GM12878 (cell line): ENCODE measurements at regions of chr2 and their contacts with region 1.

Region 1: GRCh38 chr2:218186355-218186766 is 19.6 kb upstream of the CXCR1 start:
- DNase-seq: peak; percentile 25
- ATAC-seq: peak; percentile 96
- H3K4me3 ChIP-seq: no peak overlapping the region
- H3K27ac ChIP-seq: no peak overlapping the region
- H3K4me1 ChIP-seq: no peaks in the 10 kb centered on the region
- H3K27me3 ChIP-seq: peaks cover 0 to 1% of the 10 kb centered on the region in 2 experiments; a peak in 3 of 4 replicates
- CTCF ChIP-seq: peak; percentile 82 to 86 (median 85)
- EP300 ChIP-seq: no peak
- POLR2A ChIP-seq: no peak
- RAD21 ChIP-seq: peak; percentile 78

Region 2: GRCh38 chr2:217471319-217471718 is 715.0 kb before region 1 on chr2:
- CTCF ChIA-PET with region 1: no interaction called
- POLR2A ChIA-PET with region 1: no interaction called
- RAD21 ChIA-PET with region 1: no interaction called
- SMC1A ChIA-PET with region 1: no interaction called
- in situ Hi-C with region 1: no loop called
- intact Hi-C with region 1: no loop called
- DNase-seq: no peak
- ATAC-seq: no peak
- H3K4me3 ChIP-seq: no peak overlapping the region
- H3K27ac ChIP-seq: no peak overlapping the region
- H3K4me1 ChIP-seq: peaks cover 6% of the 10 kb centered on the region
- H3K27me3 ChIP-seq: no peaks in the 10 kb centered on the region; a peak in 2 of 4 replicates
- CTCF ChIP-seq: no peak
- EP300 ChIP-seq: no peak
- POLR2A ChIP-seq: no peak
- RAD21 ChIP-seq: no peak

Region 3: DNA sequence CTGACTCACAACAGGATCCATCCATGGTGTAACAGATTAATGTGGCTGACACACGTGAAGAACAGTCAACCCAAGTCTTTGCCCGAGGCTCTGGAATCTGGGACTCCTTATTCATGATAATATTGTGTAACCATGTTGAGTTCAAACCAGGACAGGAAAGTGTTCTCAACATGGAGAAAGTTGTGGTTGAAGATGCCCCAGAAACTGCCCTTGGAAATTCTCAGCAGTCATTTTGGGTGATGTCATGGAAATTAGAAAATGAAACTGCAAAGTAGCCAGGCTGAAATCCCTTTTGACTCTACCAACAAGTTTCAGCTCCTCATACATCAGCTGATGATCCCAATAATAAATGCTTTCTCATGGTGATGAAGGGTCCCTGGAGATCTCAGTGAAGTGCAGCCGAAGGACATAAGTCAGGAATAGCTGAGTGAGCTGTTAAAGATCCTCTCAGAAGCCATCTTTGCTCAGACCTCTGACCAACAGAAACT is 491.3 kb before region 1 on chr2:
- CTCF ChIA-PET with region 1: no interaction called
- POLR2A ChIA-PET with region 1: no interaction called
- RAD21 ChIA-PET with region 1: no interaction called
- SMC1A ChIA-PET with region 1: no interaction called
- in situ Hi-C with region 1: no loop called
- intact Hi-C with region 1: no loop called
- DNase-seq: no peak
- ATAC-seq: no peak; the same call in 2 of the 3 replicates
- H3K4me3 ChIP-seq: no peak overlapping the region
- H3K27ac ChIP-seq: no peak overlapping the region
- H3K4me1 ChIP-seq: no peaks in the 10 kb centered on the region
- H3K27me3 ChIP-seq: 0 out of 4 replicates have a peak, but pooled peaks cover 0 to 5% of the 10 kb centered on the region in 2 experiments
- CTCF ChIP-seq: no peak
- EP300 ChIP-seq: no peak
- POLR2A ChIP-seq: no peak
- RAD21 ChIP-seq: no peak

Region 4: DNA sequence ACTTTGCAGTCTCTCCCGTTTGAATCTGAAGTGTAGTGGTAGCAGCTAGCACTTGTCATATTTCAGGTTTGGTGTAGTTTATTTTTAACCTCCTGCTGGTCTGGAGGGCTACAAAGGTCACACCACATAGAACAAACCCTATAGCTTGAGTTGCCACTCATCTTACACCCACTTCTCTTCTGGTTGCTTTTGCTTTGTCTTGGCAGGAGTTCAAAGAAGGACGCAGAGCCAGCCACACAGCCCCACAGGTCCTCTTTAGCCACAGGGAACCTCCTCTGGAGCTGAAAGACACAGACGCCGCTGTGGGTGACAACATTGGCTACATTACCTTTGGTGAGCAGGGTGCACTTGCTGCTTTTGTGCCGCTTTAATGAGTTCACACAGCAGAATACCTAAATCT is 58.9 kb after region 1 on chr2:
- CTCF ChIA-PET with region 1: interaction called, 4 read pairs
- POLR2A ChIA-PET with region 1: no interaction called
- RAD21 ChIA-PET with region 1: no interaction called
- SMC1A ChIA-PET with region 1: interaction called, 5 read pairs
- in situ Hi-C with region 1: no loop called
- intact Hi-C with region 1: loop called (anchors 5 kb)
- DNase-seq: no peak
- ATAC-seq: no peak
- H3K4me3 ChIP-seq: no peak overlapping the region
- H3K27ac ChIP-seq: no peak overlapping the region
- H3K4me1 ChIP-seq: no peaks in the 10 kb centered on the region
- H3K27me3 ChIP-seq: no peaks in the 10 kb centered on the region
- CTCF ChIP-seq: no peak
- EP300 ChIP-seq: no peak
- POLR2A ChIP-seq: 0 out of 2 replicates have a peak, but pooled peaks have one; percentile 34
- RAD21 ChIP-seq: no peak